Posterior cingulate gyrus (tissue), 11 donors: ENCODE measurements at regions of chr17 and their contacts with region 1.

Region 1: DNA sequence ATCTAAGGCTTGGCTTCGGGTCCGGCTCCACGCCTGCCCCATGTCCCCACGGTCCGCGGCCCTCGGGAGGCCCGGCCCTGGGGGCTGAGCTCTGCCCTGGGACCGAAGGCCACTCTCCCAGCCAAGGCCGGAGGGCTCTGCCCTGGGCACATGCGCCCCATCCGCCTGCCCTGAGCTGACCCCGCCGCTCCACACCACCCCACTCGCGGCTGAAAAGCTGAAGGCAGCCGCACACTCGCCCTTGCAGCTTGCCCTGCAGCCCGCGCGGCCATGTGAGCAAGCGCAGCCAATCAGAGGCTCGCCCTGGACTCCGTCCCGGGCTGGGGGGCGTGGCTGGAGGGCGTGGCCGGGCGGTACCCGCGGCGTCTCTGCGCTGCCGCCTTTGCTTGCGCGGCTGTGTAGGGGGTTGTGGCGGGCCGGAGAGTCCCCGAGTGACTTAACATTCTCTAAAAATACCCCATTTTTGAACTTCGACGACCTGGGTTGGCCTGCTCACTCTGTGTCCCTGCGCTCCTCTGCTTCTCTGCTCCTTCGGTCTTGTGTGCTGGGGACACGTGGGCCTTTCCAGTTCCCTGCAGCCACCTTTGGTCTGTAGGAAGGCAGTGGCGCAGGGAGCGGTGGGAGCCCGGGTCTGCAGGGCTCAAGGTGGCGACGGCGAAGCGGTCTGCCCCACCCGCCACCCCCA is 8.8 kb upstream of the MAP2K3 start:
- DNase-seq: peak; percentile 93 to 100 (median 96)

Region 2: GRCh38 chr17:20935740-20936139 is 340.0 kb before region 1 on chr17:
- intact Hi-C with region 1: no loop called
- DNase-seq: no peak

Region 3: GRCh38 chr17:21252796-21253645 is 22.7 kb before region 1 on chr17 and contains the start of gene NATD1:
- intact Hi-C with region 1: loop called (anchors 2 kb)
- DNase-seq: peak; percentile 70 to 97 (median 86)